ENCODE measurements at regions of chr13 and their contacts with region 1.

Region 1: GRCh38 chr13:99258210-99258860 is at the start of gene GPR18:
- DNase-seq: peak; percentile 31
- H3K4me3 Mint-ChIP-seq: peak within 1 kb of the TSS; percentile 97
- H3K27ac Mint-ChIP-seq: peak within 1 kb of the TSS; percentile 97
- H3K4me1 Mint-ChIP-seq: peaks cover 61% of the 10 kb centered on the region
- H3K27me3 Mint-ChIP-seq: no peaks in the 10 kb centered on the region
- total RNA-seq, gene GPR18: 7.4 and 8.4 TPM in 2 replicates

Region 2: DNA sequence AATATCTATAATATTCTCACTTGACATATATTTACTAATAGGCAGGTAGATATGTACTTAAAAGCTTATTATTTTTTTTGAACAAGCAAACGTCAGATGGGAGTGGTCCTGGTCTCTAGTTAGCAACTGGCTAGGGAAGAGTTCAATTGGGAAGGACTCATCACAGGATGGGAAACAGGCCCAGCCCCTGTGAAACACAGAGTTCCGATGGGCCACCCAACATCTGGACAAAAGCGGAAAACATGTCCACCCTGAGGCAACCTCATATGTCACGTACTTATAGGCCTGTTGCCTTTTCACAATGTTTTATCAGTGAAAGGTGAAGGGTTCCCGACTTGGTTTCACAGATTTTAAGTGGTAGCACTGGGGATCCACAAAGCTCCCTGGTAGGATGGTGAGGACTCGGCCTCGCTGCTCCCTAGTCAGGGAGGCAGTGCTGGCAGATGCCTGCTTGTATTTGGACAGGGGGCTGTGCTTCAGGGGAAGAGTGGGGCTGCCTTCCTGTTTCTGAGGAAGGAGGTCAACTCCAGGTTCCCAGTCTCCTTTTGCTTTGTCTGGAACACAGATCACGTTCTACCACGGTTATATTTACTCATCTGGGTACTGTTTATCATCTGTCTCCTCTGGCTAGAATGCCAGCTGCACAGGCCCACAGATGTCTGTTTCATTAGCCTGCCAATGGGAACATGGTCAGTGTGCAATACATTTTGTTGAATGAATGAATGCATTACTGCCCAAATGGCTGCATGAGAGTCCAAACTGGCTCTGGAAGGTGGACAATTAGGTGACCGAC is 456.5 kb before region 1 on chr13:
- intact Hi-C with region 1: no loop called
- DNase-seq: no peak
- H3K4me3 Mint-ChIP-seq: no peak overlapping the region
- H3K27ac Mint-ChIP-seq: no peak overlapping the region
- H3K4me1 Mint-ChIP-seq: peaks cover 4% of the 10 kb centered on the region
- H3K27me3 Mint-ChIP-seq: no peaks in the 10 kb centered on the region

Region 3: DNA sequence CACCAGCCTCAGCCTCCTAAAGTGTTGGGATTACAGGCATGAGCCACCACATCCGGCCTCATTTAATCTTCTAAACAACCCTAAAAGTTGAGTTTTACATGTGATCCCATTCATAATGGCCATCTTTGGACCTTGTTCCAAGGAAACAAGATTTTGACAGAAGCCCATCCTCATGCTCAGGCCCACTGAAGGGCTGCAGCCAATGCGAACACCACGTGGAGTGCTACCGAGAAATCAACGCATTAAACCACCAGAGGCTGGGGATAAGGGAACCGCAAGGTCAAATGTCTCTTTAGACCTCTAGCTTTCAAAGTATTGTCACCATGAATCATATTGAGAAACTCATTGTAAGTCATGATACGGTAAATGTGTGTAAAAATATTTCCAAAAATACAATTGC is 231.1 kb before region 1 on chr13:
- intact Hi-C with region 1: loop called (anchors 1 kb)
- DNase-seq: no peak
- H3K4me3 Mint-ChIP-seq: peak overlapping the region; percentile 48
- H3K27ac Mint-ChIP-seq: peak overlapping the region; percentile 89
- H3K4me1 Mint-ChIP-seq: peaks cover 75% of the 10 kb centered on the region
- H3K27me3 Mint-ChIP-seq: no peaks in the 10 kb centered on the region

Region 4: GRCh38 chr13:99041788-99042187 is 216.5 kb before region 1 on chr13:
- intact Hi-C with region 1: loop called (anchors 5 kb)
- DNase-seq: no peak
- H3K4me3 Mint-ChIP-seq: no peak overlapping the region
- H3K27ac Mint-ChIP-seq: no peak overlapping the region
- H3K4me1 Mint-ChIP-seq: peaks cover 66% of the 10 kb centered on the region
- H3K27me3 Mint-ChIP-seq: no peaks in the 10 kb centered on the region

Region 5: DNA sequence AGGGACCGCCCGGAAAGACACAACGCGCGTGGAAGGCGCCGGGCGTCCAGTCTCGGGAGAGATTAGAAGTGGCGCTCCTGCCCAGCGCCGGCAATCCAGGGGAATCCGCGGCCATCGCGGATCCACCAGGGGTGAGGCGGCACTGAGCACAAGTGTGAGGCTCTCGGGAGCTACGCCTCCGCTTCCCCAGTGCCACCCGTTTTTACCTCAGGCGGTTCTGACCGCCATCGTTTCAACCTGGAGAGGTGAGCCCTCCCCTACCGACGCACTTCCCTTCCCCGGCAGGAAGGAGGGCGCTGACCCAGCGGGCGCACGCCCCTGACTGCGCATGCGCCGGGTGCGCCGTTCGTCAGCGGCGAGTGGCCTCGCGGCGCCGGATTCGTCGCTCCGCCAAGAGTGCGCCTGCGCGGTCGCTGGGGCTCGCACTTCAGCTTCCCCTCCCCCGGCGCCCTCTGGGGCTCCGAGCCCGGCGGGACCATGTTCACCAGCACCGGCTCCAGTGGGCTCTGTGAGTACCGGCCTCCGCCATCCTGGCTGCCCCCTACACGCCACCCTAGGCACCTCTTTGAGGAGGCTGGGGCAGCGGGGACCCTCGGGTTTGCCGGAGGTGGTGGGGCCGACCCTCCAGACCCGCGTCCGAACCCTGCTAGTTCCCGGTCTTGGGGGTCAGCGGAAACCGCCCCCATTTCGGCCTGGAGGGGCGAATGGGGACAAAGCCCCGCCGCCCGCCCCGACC is 57.7 kb before region 1 on chr13 and contains the start of gene UBAC2:
- intact Hi-C with region 1: loop called (anchors 1 kb)
- DNase-seq: peak; percentile 96
- H3K4me3 Mint-ChIP-seq: peak within 1 kb of the TSS; percentile 97
- H3K27ac Mint-ChIP-seq: peak within 1 kb of the TSS; percentile 93
- H3K4me1 Mint-ChIP-seq: peaks cover 53% of the 10 kb centered on the region
- H3K27me3 Mint-ChIP-seq: no peaks in the 10 kb centered on the region
- total RNA-seq, gene UBAC2: 53.4 and 55.1 TPM in 2 replicates

Region 6: GRCh38 chr13:99228737-99229691 is 29.3 kb before region 1 on chr13:
- intact Hi-C with region 1: loop called (anchors 1 kb)
- DNase-seq: no peak
- H3K4me3 Mint-ChIP-seq: peak overlapping the region; percentile 66
- H3K27ac Mint-ChIP-seq: peak overlapping the region; percentile 94
- H3K4me1 Mint-ChIP-seq: peaks cover 54% of the 10 kb centered on the region
- H3K27me3 Mint-ChIP-seq: no peaks in the 10 kb centered on the region

Region 7: DNA sequence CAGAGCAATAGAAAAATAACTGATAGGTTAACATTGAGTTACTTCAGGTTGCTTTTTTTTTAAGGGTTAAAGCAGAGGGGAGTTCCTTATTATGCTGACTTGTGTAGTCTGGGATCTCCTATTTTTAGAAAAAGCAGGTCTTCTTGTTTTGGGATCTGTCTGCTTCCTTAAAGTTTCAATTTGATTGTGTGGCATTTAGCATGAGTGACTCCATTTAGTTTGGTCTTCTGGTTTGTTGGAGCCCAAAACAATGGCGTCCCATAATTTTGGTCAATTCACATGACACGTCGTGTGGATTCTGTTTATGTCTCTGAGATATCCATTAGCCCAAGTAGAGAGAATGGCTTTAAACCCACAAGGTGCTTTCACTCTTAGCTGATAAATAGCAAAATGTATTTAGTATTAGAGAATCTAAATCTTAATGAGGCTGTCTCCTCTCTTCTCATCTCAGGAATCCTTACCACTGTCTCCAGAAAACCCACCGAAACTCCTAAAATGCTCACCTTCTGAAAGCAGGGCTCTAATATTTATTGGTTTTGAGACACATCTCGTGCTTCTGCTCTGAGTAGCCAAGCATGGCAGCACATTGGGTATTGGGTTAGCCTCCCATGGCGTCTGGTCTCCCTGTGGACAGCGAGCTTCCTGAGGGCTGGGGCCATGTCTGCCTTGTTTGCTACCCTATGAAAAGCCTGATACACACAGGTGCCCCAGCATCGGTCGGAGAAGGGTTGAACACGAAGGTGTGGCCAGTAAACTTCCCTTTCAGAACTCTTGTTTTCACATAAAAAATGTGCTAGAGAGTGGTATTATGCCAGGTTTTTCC is 116.0 kb after region 1 on chr13:
- intact Hi-C with region 1: no loop called
- DNase-seq: no peak
- H3K4me3 Mint-ChIP-seq: no peak overlapping the region
- H3K27ac Mint-ChIP-seq: no peak overlapping the region
- H3K4me1 Mint-ChIP-seq: peaks cover 67% of the 10 kb centered on the region
- H3K27me3 Mint-ChIP-seq: no peaks in the 10 kb centered on the region

Region 8: DNA sequence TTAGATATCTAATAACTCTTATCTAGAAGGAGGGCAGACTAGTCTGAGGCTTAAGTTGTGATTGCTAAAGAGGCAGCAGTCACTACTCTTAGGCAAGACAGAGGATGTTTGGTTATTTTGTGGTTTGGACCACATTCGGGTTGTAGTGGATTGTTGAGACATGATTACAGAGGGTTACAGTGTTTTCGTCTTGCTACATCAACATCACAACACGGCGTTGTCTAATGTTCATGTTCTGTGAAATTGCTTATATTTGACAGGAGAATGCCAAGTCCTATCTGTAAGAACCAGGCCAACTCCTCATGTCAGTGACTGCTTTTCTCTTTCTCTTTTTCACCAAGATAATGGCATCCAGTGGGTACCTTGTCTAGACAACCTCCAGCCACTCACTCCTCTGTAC is 226.1 kb after region 1 on chr13:
- intact Hi-C with region 1: no loop called
- DNase-seq: no peak
- H3K4me3 Mint-ChIP-seq: no peak overlapping the region
- H3K27ac Mint-ChIP-seq: no peak overlapping the region
- H3K4me1 Mint-ChIP-seq: peaks cover 20% of the 10 kb centered on the region
- H3K27me3 Mint-ChIP-seq: no peaks in the 10 kb centered on the region